CD14-positive monocyte (primary cell): ENCODE measurements at regions of chr21 and their contacts with region 1.

Region 1: DNA sequence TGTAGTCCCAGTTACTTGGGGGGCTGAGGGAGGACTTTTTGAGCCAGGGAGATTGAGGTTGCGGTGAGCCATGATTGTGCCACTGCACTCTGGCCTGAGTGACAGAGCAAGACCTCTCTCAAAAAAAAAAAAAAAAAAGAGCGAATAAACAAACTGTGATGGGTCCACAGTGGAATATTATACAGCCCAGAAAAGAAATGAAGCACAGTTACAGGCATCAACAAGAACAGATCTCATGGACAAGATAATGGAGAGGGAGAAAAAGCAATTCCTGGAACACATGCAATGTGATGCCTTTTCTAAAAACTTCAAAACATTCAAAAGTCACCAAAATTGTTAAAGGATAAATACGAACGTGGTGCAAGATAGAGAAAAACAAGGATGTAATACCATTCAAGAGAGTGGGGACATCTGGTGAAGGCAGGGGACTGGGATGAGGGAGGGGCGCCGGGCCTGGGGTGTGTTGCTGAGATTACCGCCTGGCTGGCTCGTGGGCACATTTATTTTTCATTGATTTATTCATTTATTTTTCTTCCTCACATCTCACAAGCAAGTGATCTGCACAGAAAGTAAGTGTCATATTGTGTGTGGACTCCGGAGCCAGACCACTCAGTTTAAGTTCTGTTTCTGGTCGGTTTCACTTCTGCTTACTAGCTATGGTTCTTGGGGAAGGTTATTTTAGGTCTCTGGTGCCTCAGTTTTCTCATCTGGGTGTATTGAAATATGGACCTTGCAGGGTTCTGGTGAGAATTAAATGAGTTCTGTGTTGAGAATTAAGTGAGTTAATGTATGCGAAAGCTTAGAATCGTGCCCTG is 30.1 kb downstream of the ABCG1 start:
- DNase-seq: peak; percentile 78 to 87 (median 82)
- H3K4me3 ChIP-seq: peak overlapping the region in 1 of 3 experiments; percentile 26
- H3K4me3 Mint-ChIP-seq: peak overlapping the region in 1 of 2 donors; percentile 84
- H3K27ac ChIP-seq: peak overlapping the region; percentile 55 to 57
- H3K27ac Mint-ChIP-seq: peak overlapping the region; percentile 82 to 92 (median 90)
- H3K4me1 ChIP-seq: peaks cover 57 to 59% of the 10 kb centered on the region in 2 donors
- H3K4me1 Mint-ChIP-seq: peaks cover 60% of the 10 kb centered on the region
- H3K27me3 ChIP-seq: no peaks in the 10 kb centered on the region
- H3K27me3 Mint-ChIP-seq: peaks cover 5 to 12% (median 11%) of the 10 kb centered on the region in 3 donors
- CTCF ChIP-seq: no peak

Region 2: DNA sequence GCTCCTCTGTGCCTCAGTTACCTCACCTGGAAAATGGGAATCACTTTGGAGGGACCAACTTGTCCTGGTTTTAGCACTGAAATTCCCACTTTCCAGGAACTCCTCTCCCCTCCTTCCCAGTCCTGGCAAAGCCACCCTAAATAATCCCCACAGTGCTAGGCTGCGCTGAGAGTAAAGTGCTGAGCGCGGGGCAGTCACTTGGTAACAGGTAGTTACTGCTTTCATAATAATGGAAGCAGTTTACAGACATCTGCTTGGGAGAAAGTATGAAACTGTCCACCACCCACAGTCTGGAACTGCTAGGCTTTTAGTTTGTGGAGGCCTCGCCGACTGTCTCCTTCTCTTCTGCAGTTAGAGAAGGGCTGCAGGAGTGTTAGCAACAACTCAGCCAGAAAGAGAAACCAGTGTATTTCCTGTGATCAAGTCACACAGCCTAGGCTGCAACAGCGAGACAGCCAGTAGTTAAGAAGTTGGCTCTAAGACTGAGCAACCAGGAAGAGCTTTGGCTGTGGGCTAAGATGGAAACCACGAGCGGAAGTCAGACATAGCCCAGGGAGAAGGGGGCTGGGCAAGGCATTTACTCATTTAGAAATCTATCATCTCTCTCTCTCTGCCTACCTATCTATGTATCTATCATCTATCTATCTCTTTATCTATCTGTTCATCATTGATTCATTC is 60.9 kb before region 1 on chr21:
- intact Hi-C with region 1: no loop called
- DNase-seq: peak; percentile 78 to 94 (median 86)
- H3K4me3 ChIP-seq: peak overlapping the region in 2 of 3 experiments; percentile 3 to 42
- H3K4me3 Mint-ChIP-seq: peak overlapping the region; percentile 18 to 73
- H3K27ac ChIP-seq: peak overlapping the region; percentile 86 to 91
- H3K27ac Mint-ChIP-seq: peak overlapping the region; percentile 94 to 98 (median 98)
- H3K4me1 ChIP-seq: peaks cover 47 to 59% of the 10 kb centered on the region in 2 donors
- H3K4me1 Mint-ChIP-seq: peaks cover 68% of the 10 kb centered on the region
- H3K27me3 ChIP-seq: no peaks in the 10 kb centered on the region
- H3K27me3 Mint-ChIP-seq: peaks cover 2 to 3% (median 2%) of the 10 kb centered on the region in 3 donors
- CTCF ChIP-seq: no peak

Region 3: DNA sequence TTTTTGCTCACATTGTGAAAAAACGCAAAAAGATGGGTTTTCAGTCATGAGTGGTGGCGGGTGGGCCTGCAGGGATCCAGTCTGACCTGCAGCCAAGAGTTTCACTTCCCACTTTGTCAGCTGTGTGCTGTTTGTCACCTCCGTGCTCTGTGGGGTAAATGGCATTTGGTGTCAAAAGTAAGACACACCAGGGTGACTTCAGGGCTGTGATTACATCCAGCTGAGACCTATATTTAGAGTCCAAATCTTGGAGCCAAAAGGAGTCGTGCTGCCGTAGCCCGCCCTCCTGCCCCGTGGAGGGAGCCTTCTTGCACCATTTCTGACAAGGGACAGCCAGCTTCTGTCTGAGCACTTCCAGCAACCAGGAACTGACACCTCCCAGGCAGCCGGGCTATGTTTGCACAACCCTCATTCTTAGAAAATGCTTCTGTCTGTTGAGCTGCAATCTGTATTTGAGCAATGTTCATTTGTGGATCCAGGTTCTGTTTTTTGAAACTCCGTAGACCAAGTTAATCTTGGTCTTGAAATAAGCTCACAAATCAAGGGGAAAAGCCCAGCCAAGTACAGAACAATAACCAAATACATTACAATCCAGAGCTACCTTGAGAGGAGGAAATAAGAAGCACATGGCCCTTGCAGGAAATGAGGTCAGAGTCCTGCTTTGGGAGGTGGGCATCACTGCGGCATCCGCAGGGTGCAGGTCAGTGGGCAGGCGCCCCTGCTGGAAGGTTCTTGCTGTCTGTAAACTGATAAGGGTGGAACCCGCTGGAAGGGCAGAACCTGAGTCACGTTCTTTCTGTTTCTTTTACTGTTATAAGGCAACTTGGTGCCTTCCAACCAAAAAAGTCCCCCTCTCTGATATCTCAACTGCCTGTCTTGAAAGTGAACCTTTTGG is 15.7 kb before region 1 on chr21:
- intact Hi-C with region 1: loop called in 1 of 2 experiments (anchors 2 kb)
- DNase-seq: peak; percentile 91 to 92 (median 92)
- H3K4me3 ChIP-seq: peak overlapping the region in 1 of 3 experiments; percentile 74
- H3K4me3 Mint-ChIP-seq: peak overlapping the region; percentile 64 to 81
- H3K27ac ChIP-seq: peak overlapping the region; percentile 92 to 94
- H3K27ac Mint-ChIP-seq: peak overlapping the region; percentile 95 to 98 (median 97)
- H3K4me1 ChIP-seq: peaks cover 69 to 82% of the 10 kb centered on the region in 2 donors
- H3K4me1 Mint-ChIP-seq: peaks cover 86% of the 10 kb centered on the region
- H3K27me3 ChIP-seq: no peaks in the 10 kb centered on the region
- H3K27me3 Mint-ChIP-seq: peaks cover 1 to 10% (median 6%) of the 10 kb centered on the region in 3 donors
- CTCF ChIP-seq: peak; percentile 58

Region 4: DNA sequence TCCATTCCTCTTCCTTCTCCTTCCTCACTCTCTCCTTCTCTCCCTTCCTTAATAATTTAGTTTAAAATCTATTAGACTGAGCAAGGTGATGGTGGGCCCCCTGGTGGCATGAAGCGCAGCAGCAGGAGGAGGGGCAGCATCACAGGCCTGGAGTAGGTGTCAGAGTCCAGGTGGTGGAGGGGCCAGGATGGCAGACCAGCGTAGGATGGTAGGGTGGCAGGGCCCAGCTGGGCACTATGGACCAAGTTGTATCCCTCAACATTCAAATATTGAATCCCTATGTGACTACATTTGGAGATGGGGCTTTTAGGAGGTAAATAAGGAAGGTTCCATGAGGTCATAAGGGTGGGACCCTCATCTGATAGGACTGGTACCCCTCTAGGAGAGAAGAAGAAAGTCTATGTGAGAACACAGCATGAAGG is 569.3 kb after region 1 on chr21:
- intact Hi-C with region 1: no loop called
- DNase-seq: peak; percentile 29 to 50 (median 42)
- H3K4me3 ChIP-seq: no peak overlapping the region
- H3K4me3 Mint-ChIP-seq: no peak overlapping the region
- H3K27ac ChIP-seq: no peak overlapping the region
- H3K27ac Mint-ChIP-seq: no peak overlapping the region
- H3K4me1 ChIP-seq: no peaks in the 10 kb centered on the region
- H3K4me1 Mint-ChIP-seq: no peaks in the 10 kb centered on the region
- H3K27me3 ChIP-seq: no peaks in the 10 kb centered on the region
- H3K27me3 Mint-ChIP-seq: peaks cover 0 to 4% (median 2%) of the 10 kb centered on the region in 3 donors
- CTCF ChIP-seq: peak; percentile 95